ENCODE measurements at regions of chr12 and their contacts with region 1.

Region 1: GRCh38 chr12:57462251-57462911 is 2.8 kb downstream of the GLI1 start:
- DNase-seq: peak; percentile 84 to 88 (median 87)
- H3K4me3 ChIP-seq: peak overlapping the region; percentile 42 to 59
- H3K4me3 Mint-ChIP-seq: peak overlapping the region; percentile 86 to 95 (median 89)
- H3K27ac ChIP-seq: no peak overlapping the region
- H3K27ac Mint-ChIP-seq: peak overlapping the region; percentile 13 to 91 (median 80)
- H3K4me1 ChIP-seq: peaks cover 36% of the 10 kb centered on the region
- H3K4me1 Mint-ChIP-seq: peaks cover 23 to 58% (median 35%) of the 10 kb centered on the region in 4 donors
- H3K27me3 ChIP-seq: peaks cover 12% of the 10 kb centered on the region
- H3K27me3 Mint-ChIP-seq: peaks cover 7 to 18% of the 10 kb centered on the region in 2 donors

Region 2: GRCh38 chr12:57430931-57431720 is 31.3 kb before region 1 on chr12 and contains the start of gene R3HDM2:
- CTCF ChIA-PET with region 1: interaction called, 16 read pairs
- POLR2A ChIA-PET with region 1: interaction called, 17 read pairs
- intact Hi-C with region 1: loop called (anchors 1 kb)
- DNase-seq: peak; percentile 94 to 96 (median 95)
- H3K4me3 ChIP-seq: peak within 1 kb of the TSS; percentile 33 to 67
- H3K4me3 Mint-ChIP-seq: peak within 1 kb of the TSS; percentile 97 to 100 (median 99)
- H3K27ac ChIP-seq: peak within 1 kb of the TSS; percentile 90
- H3K27ac Mint-ChIP-seq: peak within 1 kb of the TSS; percentile 97 to 100 (median 100)
- H3K4me1 ChIP-seq: peaks cover 21% of the 10 kb centered on the region
- H3K4me1 Mint-ChIP-seq: peaks cover 24 to 48% (median 39%) of the 10 kb centered on the region in 4 donors
- H3K27me3 ChIP-seq: no peaks in the 10 kb centered on the region
- H3K27me3 Mint-ChIP-seq: no peaks in the 10 kb centered on the region
- total RNA-seq, gene R3HDM2: 124 to 132 TPM

Region 3: GRCh38 chr12:57514720-57515467 is 52.5 kb after region 1 on chr12:
- CTCF ChIA-PET with region 1: interaction called, 12 read pairs
- POLR2A ChIA-PET with region 1: interaction called, 18 read pairs
- intact Hi-C with region 1: loop called (anchors 1 kb)
- DNase-seq: no peak
- H3K4me3 ChIP-seq: no peak overlapping the region
- H3K4me3 Mint-ChIP-seq: no peak overlapping the region
- H3K27ac ChIP-seq: no peak overlapping the region
- H3K27ac Mint-ChIP-seq: peak overlapping the region in 3 of 7 donors; percentile 13 to 99 (median 36)
- H3K4me1 ChIP-seq: peaks cover 27% of the 10 kb centered on the region
- H3K4me1 Mint-ChIP-seq: peaks cover 12 to 29% (median 19%) of the 10 kb centered on the region in 4 donors
- H3K27me3 ChIP-seq: no peaks in the 10 kb centered on the region
- H3K27me3 Mint-ChIP-seq: no peaks in the 10 kb centered on the region

Region 4: DNA sequence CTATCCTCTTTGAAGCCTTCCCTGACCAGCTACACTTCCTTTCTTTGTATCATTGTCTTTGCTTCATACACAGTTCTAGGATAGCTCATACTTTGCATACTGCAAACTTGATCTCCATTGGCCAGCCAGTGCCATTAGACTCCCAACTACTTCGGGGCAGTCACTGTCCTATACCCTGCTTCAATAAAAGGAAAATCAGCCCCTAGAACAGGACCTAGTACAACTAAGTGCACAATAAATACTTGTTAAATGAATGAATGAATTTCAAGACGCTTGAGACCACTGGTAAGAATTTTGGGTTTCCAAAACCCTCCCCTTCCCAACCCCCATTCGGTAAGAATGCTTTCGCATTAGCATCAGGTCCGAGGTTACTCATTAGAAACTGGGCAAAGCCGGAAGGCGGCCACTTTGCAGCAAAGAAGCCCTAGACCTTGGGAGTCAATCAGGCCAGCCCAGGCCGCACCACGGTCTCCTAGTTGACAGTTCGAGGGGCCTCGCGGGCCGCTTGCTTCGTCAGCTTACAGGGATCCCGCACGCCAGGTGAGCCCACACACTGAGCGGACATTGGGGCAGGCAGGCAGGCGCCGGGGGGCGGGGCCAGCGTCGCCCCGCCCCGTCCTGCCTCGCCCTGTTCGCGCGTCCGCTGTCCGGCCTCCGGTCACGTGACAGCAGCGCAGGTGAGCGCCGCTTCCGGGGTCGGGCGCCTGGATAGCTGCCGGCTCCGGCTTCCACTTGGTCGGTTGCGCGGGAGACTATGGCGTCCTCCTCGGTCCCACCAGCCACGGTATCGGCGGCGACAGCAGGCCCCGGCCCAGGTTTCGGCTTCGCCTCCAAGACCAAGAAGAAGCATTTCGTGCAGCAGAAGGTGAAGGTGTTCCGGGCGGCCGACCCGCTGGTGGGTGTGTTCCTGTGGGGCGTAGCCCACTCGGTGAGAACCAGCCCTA is 128.4 kb after region 1 on chr12 and contains the start of gene PIP4K2C:
- CTCF ChIA-PET with region 1: interaction called, 5 read pairs
- POLR2A ChIA-PET with region 1: interaction called, 3 read pairs
- intact Hi-C with region 1: loop called (anchors 1 kb)
- DNase-seq: peak; percentile 73 to 83 (median 75)
- H3K4me3 ChIP-seq: peak within 1 kb of the TSS; percentile 54 to 87
- H3K4me3 Mint-ChIP-seq: peak within 1 kb of the TSS; percentile 86 to 92 (median 90)
- H3K27ac ChIP-seq: peak within 1 kb of the TSS; percentile 63
- H3K27ac Mint-ChIP-seq: peak within 1 kb of the TSS; percentile 73 to 96 (median 91)
- H3K4me1 ChIP-seq: peaks cover 27% of the 10 kb centered on the region
- H3K4me1 Mint-ChIP-seq: peaks cover 23 to 39% (median 30%) of the 10 kb centered on the region in 4 donors
- H3K27me3 ChIP-seq: no peaks in the 10 kb centered on the region
- H3K27me3 Mint-ChIP-seq: no peaks in the 10 kb centered on the region
- total RNA-seq, gene PIP4K2C: 32.4 to 36.0 TPM

Region 5: DNA sequence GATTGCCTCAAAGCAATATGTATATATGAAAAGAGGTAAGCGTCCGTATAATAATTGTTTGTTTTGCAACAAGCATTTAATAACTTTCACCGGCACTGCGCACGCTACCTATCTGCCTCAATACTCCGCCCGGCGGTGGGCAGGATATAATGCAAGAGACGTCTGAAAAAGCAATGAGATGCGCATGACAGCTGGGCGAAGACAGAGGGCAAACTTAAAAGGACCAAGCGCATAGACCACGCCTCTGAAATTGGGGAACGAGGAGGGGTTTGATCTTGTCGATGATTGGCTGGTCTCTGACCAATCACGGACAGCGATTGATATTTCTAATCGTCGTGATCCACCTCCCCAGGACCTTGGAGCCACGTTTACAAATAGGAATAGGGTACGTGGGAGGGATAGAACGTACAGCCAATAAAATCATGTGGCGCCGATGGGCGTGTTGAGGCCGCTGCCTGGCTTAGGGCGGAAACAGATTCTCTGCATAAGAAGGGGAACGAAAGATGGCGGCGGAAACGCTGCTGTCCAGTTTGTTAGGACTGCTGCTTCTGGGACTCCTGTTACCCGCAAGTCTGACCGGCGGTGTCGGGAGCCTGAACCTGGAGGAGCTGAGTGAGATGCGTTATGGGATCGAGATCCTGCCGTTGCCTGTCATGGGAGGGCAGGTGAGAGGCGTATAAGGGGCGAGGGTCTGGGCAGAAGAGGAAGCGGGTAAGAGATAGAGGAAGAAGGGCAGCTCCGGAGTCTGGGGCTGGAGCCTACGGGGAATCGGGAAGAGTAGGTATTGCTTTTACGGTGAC is 231.5 kb after region 1 on chr12 and contains the start of gene OS9:
- CTCF ChIA-PET with region 1: interaction called, 3 read pairs
- POLR2A ChIA-PET with region 1: interaction called, 6 read pairs
- intact Hi-C with region 1: loop called (anchors 10 kb)
- DNase-seq: peak; percentile 93 to 100 (median 99)
- H3K4me3 ChIP-seq: peak within 1 kb of the TSS; percentile 75 to 82
- H3K4me3 Mint-ChIP-seq: no peak within 1 kb of the TSS
- H3K27ac ChIP-seq: peak within 1 kb of the TSS; percentile 79
- H3K27ac Mint-ChIP-seq: no peak within 1 kb of the TSS
- H3K4me1 ChIP-seq: peaks cover 26% of the 10 kb centered on the region
- H3K4me1 Mint-ChIP-seq: peaks cover 0 to 18% (median 5%) of the 10 kb centered on the region in 4 donors
- H3K27me3 ChIP-seq: no peaks in the 10 kb centered on the region
- H3K27me3 Mint-ChIP-seq: peaks cover 4 to 6% of the 10 kb centered on the region in 2 donors
- total RNA-seq, gene OS9: 189 to 195 TPM